Activated B cell treated with CpG ODN at 0.5 μM for 24 hours (primary cell): ENCODE measurements at regions of chr1 and their contacts with region 1.

Region 1: GRCh38 chr1:222654849-222655248 is 37.0 kb downstream of the MIA3 start:
- DNase-seq: no peak
- ATAC-seq: peak; percentile 99
- H3K4me3 Mint-ChIP-seq: peak overlapping the region; percentile 39
- H3K27ac Mint-ChIP-seq: peak overlapping the region; percentile 80
- H3K4me1 Mint-ChIP-seq: peaks cover 33% of the 10 kb centered on the region
- H3K27me3 Mint-ChIP-seq: no peaks in the 10 kb centered on the region
- CTCF ChIP-seq: no peak

Region 2: GRCh38 chr1:222546548-222547259 is 108.1 kb before region 1 on chr1:
- CTCF ChIA-PET with region 1: no interaction called
- POLR2A ChIA-PET with region 1: no interaction called
- intact Hi-C with region 1: no loop called
- DNase-seq: no peak
- ATAC-seq: no peak
- H3K4me3 Mint-ChIP-seq: no peak overlapping the region
- H3K27ac Mint-ChIP-seq: no peak overlapping the region
- H3K4me1 Mint-ChIP-seq: peaks cover 2% of the 10 kb centered on the region
- H3K27me3 Mint-ChIP-seq: peaks cover 21% of the 10 kb centered on the region
- CTCF ChIP-seq: no peak

Region 3: DNA sequence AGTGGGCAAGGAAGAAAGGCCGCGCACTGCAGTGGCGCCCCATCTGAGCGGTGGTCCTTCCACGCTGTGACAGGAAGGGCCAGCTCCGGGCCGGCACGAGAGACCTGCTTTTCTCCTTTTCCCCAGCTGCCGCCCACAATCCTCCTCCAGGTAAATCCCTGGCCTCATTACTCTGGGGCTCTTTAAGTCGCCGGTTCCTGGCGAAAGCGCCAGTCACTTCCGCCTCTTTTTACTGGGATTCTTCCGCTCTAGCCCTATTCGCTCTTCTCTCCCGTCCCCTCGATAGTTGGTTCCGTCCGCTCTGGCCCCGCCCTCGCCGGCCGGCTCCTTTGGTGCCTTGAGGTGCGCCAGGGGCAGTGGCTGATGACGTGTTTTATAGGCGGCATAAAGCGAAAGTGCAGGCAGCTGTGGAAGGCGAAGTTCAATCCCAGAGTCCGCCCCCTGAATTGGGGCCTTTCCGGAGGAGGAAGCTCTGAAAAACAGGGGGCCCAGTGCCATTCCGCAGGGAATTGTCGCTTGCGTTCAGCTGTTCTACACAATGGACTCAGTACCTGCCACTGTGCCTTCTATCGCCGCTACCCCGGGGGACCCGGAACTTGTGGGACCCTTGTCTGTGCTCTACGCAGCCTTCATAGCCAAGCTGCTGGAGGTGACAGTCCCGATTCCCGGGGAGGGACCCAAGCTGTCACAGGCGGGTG is 10.8 kb before region 1 on chr1:
- CTCF ChIA-PET with region 1: interaction called, 5 read pairs
- POLR2A ChIA-PET with region 1: interaction called, 41 read pairs
- intact Hi-C with region 1: loop called (anchors 1 kb)
- DNase-seq: peak; percentile 94
- ATAC-seq: peak; percentile 96
- H3K4me3 Mint-ChIP-seq: peak overlapping the region; percentile 100
- H3K27ac Mint-ChIP-seq: peak overlapping the region; percentile 99
- H3K4me1 Mint-ChIP-seq: peaks cover 25% of the 10 kb centered on the region
- H3K27me3 Mint-ChIP-seq: no peaks in the 10 kb centered on the region
- CTCF ChIP-seq: no peak

Region 4: GRCh38 chr1:223081181-223081994 is 426.5 kb after region 1 on chr1:
- CTCF ChIA-PET with region 1: no interaction called
- POLR2A ChIA-PET with region 1: no interaction called
- intact Hi-C with region 1: loop called (anchors 1 kb)
- DNase-seq: peak; percentile 71
- ATAC-seq: peak; percentile 99
- H3K4me3 Mint-ChIP-seq: peak overlapping the region; percentile 83
- H3K27ac Mint-ChIP-seq: peak overlapping the region; percentile 80
- H3K4me1 Mint-ChIP-seq: peaks cover 3% of the 10 kb centered on the region
- H3K27me3 Mint-ChIP-seq: peaks cover 5% of the 10 kb centered on the region
- CTCF ChIP-seq: peak; percentile 92

Region 5: GRCh38 chr1:223123011-223123610 is 468.3 kb after region 1 on chr1:
- CTCF ChIA-PET with region 1: interaction called, 3 read pairs
- POLR2A ChIA-PET with region 1: no interaction called
- intact Hi-C with region 1: loop called (anchors 1 kb)
- DNase-seq: no peak
- ATAC-seq: no peak
- H3K4me3 Mint-ChIP-seq: peak overlapping the region; percentile 36
- H3K27ac Mint-ChIP-seq: no peak overlapping the region
- H3K4me1 Mint-ChIP-seq: peaks cover 8% of the 10 kb centered on the region
- H3K27me3 Mint-ChIP-seq: peaks cover 7% of the 10 kb centered on the region
- CTCF ChIP-seq: no peak